ENCODE measurements at regions of chr6 and their contacts with region 1.

Region 1: GRCh38 chr6:168895102-168895812 is 358.4 kb downstream of the THBS2 start:
- DNase-seq: peak; percentile 65 to 87 (median 70)
- ATAC-seq: peak; percentile 55 to 93 (median 82)
- H3K4me3 ChIP-seq: peak overlapping the region in 6 of 12 donors; percentile 18 to 32 (median 25)
- H3K27ac ChIP-seq: no peak overlapping the region
- H3K4me1 ChIP-seq: peaks cover 0 to 4% (median 0%) of the 10 kb centered on the region in 12 donors
- H3K27me3 ChIP-seq: peaks cover 0 to 3% (median 0%) of the 10 kb centered on the region in 9 donors
- CTCF ChIP-seq: peak; percentile 83 to 95 (median 88)
- POLR2A ChIP-seq: no peak

Region 2: GRCh38 chr6:168851460-168852375 is 43.5 kb before region 1 on chr6:
- intact Hi-C with region 1: no loop called
- DNase-seq: no peak
- ATAC-seq: no peak
- H3K4me3 ChIP-seq: peak overlapping the region in 8 of 12 donors; percentile 4 to 49 (median 34)
- H3K27ac ChIP-seq: peak overlapping the region in 2 of 12 donors; percentile 31 to 34
- H3K4me1 ChIP-seq: peaks cover 0 to 2% (median 0%) of the 10 kb centered on the region in 12 donors
- H3K27me3 ChIP-seq: peaks cover 0 to 8% (median 0%) of the 10 kb centered on the region in 9 donors
- CTCF ChIP-seq: no peak
- POLR2A ChIP-seq: no peak

Region 3: GRCh38 chr6:169520104-169520503 is 624.8 kb after region 1 on chr6:
- intact Hi-C with region 1: loop called in 5 of 10 experiments (anchors 5 to 10 kb)
- DNase-seq: no peak
- ATAC-seq: peak in 1 of 4 donors; percentile 47
- H3K4me3 ChIP-seq: no peak overlapping the region
- H3K27ac ChIP-seq: no peak overlapping the region
- H3K4me1 ChIP-seq: no peaks in the 10 kb centered on the region
- H3K27me3 ChIP-seq: no peaks in the 10 kb centered on the region
- CTCF ChIP-seq: peak in 10 of 12 donors; percentile 15 to 64 (median 44)
- POLR2A ChIP-seq: no peak

Region 4: DNA sequence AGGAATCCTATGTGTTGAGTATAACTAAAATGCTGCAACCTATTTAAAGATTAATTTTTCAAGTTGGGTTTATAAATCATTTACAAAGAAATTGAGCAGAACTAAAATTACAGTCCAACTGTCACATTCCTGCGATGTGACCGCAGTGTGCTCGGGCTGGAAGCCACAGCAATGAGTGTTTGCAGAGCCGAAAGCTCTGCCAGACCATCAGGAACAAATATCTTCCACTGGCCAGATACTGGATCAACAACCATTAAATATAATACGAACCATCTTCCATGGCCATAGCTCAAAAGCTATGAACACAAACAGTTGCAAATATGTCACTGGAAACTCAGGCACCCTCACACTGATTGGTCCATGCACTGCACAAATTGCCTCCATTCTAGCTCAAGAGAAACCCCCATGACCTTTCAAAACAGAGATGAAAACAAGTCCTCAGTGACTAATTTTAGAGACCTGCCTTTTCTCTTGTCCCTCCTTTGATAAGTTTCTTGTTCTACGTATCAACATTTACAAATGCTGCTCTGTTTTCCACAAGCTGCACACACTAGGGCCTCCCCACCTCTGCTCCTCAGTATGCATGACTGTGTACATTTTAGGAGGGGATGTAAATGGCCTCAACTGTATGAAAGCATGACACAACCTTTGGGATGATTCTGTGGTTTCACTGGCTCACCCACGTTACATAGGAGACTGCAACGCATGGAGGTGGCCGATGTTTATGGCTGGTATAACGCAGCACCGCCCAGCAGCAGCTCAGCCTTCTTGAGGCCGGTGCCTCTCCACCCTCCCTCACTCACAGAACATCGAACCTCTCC is 634.9 kb after region 1 on chr6:
- intact Hi-C with region 1: loop called in 1 of 10 experiments (anchors 10 kb)
- DNase-seq: peak in 1 of 5 donors; percentile 21
- ATAC-seq: peak; percentile 41 to 71 (median 50)
- H3K4me3 ChIP-seq: no peak overlapping the region
- H3K27ac ChIP-seq: peak overlapping the region in 2 of 12 donors; percentile 2 to 43
- H3K4me1 ChIP-seq: peaks cover 0 to 4% (median 0%) of the 10 kb centered on the region in 12 donors
- H3K27me3 ChIP-seq: no peaks in the 10 kb centered on the region
- CTCF ChIP-seq: no peak
- POLR2A ChIP-seq: no peak